ENCODE measurements at regions of chr12 and their contacts with region 1.

Region 1: DNA sequence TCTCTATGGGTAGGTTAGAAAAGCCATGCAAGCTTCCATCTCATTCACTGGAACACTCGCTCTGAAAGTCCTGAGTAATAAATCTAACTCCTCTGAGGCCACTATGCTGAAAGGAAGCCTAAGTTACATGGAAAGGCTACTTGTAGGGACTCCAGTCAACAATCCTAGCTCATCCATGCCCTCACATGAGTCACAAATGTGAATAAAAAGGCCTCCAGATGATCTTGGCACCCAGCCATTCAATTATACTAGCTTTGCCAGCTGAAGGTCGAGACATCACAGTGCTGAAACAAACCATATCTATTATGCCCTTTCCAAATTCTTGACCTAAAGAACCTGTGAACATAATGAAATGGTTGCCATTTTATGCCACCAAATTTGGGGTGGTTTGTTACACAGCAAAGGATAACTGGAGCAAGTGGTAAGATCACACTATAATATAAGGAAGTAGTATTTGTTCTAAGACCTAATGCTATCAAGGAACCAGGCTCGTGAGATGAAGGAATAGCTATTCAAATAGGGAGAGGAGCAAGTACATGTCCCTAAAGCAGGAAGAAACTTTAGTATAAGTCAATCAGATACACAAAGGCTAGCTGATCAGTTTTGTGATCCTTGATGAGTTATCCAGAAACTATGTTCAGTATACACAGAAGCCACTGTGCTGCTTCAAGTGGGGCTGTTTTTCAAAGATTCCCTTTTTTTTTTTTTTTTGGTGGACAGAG is 142.1 kb downstream of the MED13L start:
- DNase-seq: no peak
- H3K4me3 Mint-ChIP-seq: no peak overlapping the region
- H3K27ac Mint-ChIP-seq: peak overlapping the region; percentile 89
- H3K4me1 Mint-ChIP-seq: peaks cover 76% of the 10 kb centered on the region
- H3K27me3 Mint-ChIP-seq: no peaks in the 10 kb centered on the region

Region 2: GRCh38 chr12:116087962-116088361 is 47.4 kb before region 1 on chr12:
- CTCF ChIA-PET with region 1: no interaction called
- intact Hi-C with region 1: loop called (anchors 2 kb)
- DNase-seq: no peak
- H3K4me3 Mint-ChIP-seq: no peak overlapping the region
- H3K27ac Mint-ChIP-seq: no peak overlapping the region
- H3K4me1 Mint-ChIP-seq: peaks cover 46% of the 10 kb centered on the region
- H3K27me3 Mint-ChIP-seq: no peaks in the 10 kb centered on the region

Measured in activated naive CD4-positive, alpha-beta T cell treated with anti-CD3 and anti-CD28 coated beads for 36 hours (primary cell).